ENCODE measurements at regions of chr4 and their contacts with region 1.

Region 1: GRCh38 chr4:139301113-139301820 is at the start of gene NAA15:
- DNase-seq: peak; percentile 84
- H3K4me3 ChIP-seq: peak within 1 kb of the TSS; percentile 70 to 99 (median 86)
- H3K27ac ChIP-seq: peak within 1 kb of the TSS; percentile 86 to 98 (median 96)
- H3K4me1 ChIP-seq: peaks cover 1 to 80% (median 39%) of the 10 kb centered on the region in 3 donors
- H3K27me3 ChIP-seq: no peaks in the 10 kb centered on the region
- CTCF ChIP-seq: peak in 2 of 6 experiments; percentile 13 to 39
- POLR2A ChIP-seq: peak in 3 of 4 donors; percentile 57 to 89 (median 68)
- total RNA-seq, gene NAA15: 28.8 to 51.1 (median 38.4) TPM

Region 2: GRCh38 chr4:139030614-139031235 is 270.5 kb before region 1 on chr4:
- intact Hi-C with region 1: loop called (anchors 10 kb)
- DNase-seq: no peak
- H3K4me3 ChIP-seq: no peak overlapping the region
- H3K27ac ChIP-seq: no peak overlapping the region
- H3K4me1 ChIP-seq: peaks cover 0 to 25% (median 3%) of the 10 kb centered on the region in 3 donors
- H3K27me3 ChIP-seq: no peaks in the 10 kb centered on the region
- CTCF ChIP-seq: peak; percentile 60 to 86 (median 80)
- POLR2A ChIP-seq: no peak

Region 3: DNA sequence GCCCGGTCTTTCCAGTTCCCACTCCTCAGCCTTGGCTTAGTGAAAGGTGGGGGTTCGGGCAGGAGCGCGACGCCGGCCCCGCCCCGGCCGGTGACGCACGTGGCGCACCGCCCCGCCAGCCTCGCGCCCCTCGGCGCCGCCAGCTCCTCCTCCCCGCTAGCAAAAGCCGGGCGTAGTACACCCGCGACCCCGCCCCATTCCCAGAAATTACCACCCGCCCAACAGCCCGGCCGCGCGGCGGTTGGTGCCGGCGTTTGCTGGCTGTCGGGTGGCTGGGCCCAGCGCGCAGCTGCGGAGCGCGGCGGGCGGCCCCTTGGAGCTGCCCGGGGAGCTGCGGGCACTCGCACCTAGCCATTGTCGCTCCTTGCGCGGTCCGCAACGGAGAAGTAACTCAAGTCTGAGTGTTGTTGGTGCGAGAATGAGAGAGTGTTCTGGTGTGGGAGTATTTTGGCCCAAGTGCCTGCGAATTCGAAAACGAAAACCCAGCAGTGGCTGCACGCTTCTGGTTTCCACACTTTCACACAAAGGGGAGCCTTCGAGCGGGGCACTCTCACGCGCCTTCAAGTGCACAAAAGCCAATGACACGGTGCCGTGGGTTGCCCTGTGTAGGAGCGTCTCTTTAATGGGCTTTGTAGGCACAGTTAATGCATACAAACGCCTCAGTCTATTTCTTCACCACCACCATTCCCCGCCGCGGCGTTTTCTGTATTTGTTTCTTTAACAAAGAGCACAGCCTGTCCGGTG is 123.2 kb before region 1 on chr4:
- intact Hi-C with region 1: loop called (anchors 2 kb)
- DNase-seq: peak; percentile 71
- H3K4me3 ChIP-seq: peak overlapping the region; percentile 81 to 96 (median 91)
- H3K27ac ChIP-seq: peak overlapping the region; percentile 97 to 100 (median 98)
- H3K4me1 ChIP-seq: peaks cover 0 to 31% (median 10%) of the 10 kb centered on the region in 3 donors
- H3K27me3 ChIP-seq: no peaks in the 10 kb centered on the region
- CTCF ChIP-seq: no peak
- POLR2A ChIP-seq: peak in 3 of 4 donors; percentile 74 to 93 (median 85)

Region 4: GRCh38 chr4:139943277-139943676 is 642.0 kb after region 1 on chr4:
- intact Hi-C with region 1: no loop called
- DNase-seq: no peak
- H3K4me3 ChIP-seq: no peak overlapping the region
- H3K27ac ChIP-seq: no peak overlapping the region
- H3K4me1 ChIP-seq: peaks cover 0 to 33% (median 14%) of the 10 kb centered on the region in 3 donors
- H3K27me3 ChIP-seq: no peaks in the 10 kb centered on the region
- CTCF ChIP-seq: no peak
- POLR2A ChIP-seq: no peak

Measured in esophagus squamous epithelium (tissue), 5 donors.